PC-3 (cell line): ENCODE measurements at regions of chr19 and their contacts with region 1.

Region 1: DNA sequence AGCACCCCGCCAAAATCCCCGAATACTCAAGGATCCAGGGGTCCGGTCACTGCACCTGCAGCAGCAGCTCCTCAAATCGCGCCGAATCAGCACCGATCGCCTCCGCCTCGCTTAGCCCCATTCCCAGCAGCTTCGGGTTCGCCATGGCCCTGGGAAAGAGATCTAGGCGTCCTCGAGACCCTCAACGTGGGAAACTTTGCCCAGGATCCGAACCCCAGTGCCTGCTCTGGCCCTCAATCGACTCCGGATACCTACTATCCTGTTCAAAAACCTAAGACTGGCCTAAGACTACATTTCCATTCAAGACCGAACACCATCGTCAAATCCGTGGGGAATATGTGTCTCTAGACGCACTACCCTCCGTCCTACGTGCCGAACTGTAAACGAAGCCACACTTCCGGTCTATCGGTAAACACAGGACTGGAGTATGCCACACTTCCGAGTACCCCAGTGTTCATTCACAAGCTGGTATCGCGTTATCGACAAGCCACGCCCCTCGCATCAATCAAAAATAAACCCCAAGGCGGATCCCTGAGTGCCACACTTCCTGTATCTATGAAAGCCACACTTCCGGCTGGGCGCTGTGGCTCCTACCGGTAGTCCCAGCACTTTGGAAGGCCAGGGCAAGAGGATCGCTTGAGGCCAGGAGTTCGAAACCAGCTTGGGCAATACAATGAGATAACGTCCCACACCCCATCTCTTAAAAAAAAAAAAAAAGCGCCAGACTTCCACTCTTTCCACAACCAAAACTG is at the start of gene PIH1D1:
- DNase-seq: peak; percentile 100
- ATAC-seq: peak; percentile 97
- H3K4me3 ChIP-seq: peak within 1 kb of the TSS; percentile 80
- H3K27ac ChIP-seq: peak within 1 kb of the TSS; percentile 11; the same call in 1 of the 2 replicates
- H3K4me1 ChIP-seq: peaks cover 8% of the 10 kb centered on the region; the same call in 1 of the 2 replicates
- H3K27me3 ChIP-seq: no peaks in the 10 kb centered on the region
- CTCF ChIP-seq: no peak
- total RNA-seq, gene PIH1D1: 171 and 200 TPM in 2 replicates

Region 2: DNA sequence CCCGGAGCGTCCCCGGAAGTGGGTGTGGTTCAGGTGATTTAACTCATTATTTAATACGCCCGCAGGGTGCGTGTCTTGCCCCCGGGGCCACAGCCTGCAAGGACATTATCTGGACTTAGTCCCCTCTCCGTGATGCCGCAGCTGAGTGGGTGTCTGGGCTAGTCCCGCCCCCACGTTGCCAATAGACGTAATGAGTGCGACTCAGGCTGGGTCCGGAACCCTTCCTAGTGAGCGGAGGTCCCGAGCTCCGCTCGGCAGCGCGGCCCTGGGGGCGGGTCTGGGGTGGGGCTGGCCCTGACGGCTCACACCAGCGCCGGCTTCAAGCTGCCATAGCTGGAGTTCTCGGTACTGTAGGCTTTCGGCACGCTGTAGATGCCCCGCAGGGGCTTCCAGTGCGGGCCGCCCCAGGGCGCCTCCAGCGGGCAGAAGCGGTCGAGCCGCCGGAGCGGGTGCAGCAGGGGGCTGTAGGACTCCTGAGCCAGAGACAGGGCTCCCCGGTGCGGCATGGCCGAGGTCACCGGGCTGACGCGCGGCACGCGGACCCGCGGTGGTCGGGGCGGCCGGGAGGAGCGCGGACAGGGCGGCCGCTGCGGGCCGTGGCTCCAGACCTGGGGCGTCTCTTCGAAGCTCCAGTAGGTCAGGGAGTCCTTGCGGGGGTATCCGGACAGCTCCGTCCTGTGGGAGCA is 433.8 kb before region 1 on chr19:
- CTCF ChIA-PET with region 1: no interaction called
- POLR2A ChIA-PET with region 1: no interaction called
- intact Hi-C with region 1: no loop called
- DNase-seq: peak; percentile 59
- ATAC-seq: peak; percentile 74
- H3K4me3 ChIP-seq: peak overlapping the region; percentile 60
- H3K27ac ChIP-seq: no peak overlapping the region
- H3K4me1 ChIP-seq: peaks cover 10% of the 10 kb centered on the region; the same call in 1 of the 2 replicates
- H3K27me3 ChIP-seq: no peaks in the 10 kb centered on the region
- CTCF ChIP-seq: 0 out of 2 replicates have a peak, but pooled peaks have one; percentile 27

Region 3: DNA sequence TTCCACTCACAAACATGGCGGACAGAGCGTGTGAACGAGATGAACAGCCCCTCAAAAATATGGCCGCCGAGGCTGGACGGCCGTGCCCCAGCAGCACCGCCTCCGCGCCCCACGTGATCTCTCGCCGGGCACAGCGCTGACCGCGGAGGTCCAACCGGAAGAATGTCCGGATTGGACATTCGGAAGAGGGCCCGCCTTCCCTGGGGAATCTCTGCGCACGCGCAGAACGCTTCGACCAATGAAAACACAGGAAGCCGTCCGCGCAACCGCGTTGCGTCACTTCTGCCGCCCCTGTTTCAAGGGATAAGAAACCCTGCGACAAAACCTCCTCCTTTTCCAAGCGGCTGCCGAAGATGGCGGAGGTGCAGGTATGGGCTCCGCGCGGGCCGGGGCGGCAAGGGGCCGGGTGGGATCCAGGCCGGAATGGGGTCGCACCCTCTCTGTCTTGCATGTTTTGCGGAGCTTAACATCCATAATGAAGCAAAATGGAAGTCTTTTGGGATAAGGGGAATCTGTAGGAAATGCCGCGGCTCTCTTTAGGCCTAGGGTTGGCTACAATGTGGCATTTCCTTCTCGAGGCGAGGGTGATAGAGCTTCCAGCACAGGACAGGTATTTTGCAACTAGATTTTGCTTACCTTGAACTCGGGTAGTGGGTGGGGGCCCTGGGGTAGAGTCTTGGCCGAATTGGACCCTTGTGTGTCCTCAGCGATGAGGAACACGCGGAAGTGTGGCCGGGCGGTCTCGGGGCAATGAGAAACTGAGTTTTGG is 35.9 kb after region 1 on chr19 and contains the start of gene RPL13A:
- CTCF ChIA-PET with region 1: no interaction called
- POLR2A ChIA-PET with region 1: interaction called, 14 read pairs
- intact Hi-C with region 1: loop called (anchors 1 kb)
- DNase-seq: peak; percentile 100
- ATAC-seq: peak; percentile 96
- H3K4me3 ChIP-seq: peak within 1 kb of the TSS; percentile 89
- H3K27ac ChIP-seq: peak within 1 kb of the TSS; percentile 56
- H3K4me1 ChIP-seq: peaks cover 12% of the 10 kb centered on the region; the same call in 1 of the 2 replicates
- H3K27me3 ChIP-seq: no peaks in the 10 kb centered on the region
- CTCF ChIP-seq: no peak
- total RNA-seq, gene RPL13A: 3,023 and 3,169 TPM in 2 replicates

Region 4: GRCh38 chr19:49546825-49547565 is 95.4 kb after region 1 on chr19:
- CTCF ChIA-PET with region 1: interaction called, 4 read pairs
- POLR2A ChIA-PET with region 1: interaction called, 11 read pairs
- intact Hi-C with region 1: no loop called
- DNase-seq: peak; percentile 99
- ATAC-seq: peak; percentile 90
- H3K4me3 ChIP-seq: peak overlapping the region; percentile 31
- H3K27ac ChIP-seq: peak overlapping the region; percentile 42
- H3K4me1 ChIP-seq: peaks cover 8% of the 10 kb centered on the region; the same call in 1 of the 2 replicates
- H3K27me3 ChIP-seq: no peaks in the 10 kb centered on the region
- CTCF ChIP-seq: peak; percentile 97